ENCODE measurements at regions of chr16 and their contacts with region 1.

Region 1: DNA sequence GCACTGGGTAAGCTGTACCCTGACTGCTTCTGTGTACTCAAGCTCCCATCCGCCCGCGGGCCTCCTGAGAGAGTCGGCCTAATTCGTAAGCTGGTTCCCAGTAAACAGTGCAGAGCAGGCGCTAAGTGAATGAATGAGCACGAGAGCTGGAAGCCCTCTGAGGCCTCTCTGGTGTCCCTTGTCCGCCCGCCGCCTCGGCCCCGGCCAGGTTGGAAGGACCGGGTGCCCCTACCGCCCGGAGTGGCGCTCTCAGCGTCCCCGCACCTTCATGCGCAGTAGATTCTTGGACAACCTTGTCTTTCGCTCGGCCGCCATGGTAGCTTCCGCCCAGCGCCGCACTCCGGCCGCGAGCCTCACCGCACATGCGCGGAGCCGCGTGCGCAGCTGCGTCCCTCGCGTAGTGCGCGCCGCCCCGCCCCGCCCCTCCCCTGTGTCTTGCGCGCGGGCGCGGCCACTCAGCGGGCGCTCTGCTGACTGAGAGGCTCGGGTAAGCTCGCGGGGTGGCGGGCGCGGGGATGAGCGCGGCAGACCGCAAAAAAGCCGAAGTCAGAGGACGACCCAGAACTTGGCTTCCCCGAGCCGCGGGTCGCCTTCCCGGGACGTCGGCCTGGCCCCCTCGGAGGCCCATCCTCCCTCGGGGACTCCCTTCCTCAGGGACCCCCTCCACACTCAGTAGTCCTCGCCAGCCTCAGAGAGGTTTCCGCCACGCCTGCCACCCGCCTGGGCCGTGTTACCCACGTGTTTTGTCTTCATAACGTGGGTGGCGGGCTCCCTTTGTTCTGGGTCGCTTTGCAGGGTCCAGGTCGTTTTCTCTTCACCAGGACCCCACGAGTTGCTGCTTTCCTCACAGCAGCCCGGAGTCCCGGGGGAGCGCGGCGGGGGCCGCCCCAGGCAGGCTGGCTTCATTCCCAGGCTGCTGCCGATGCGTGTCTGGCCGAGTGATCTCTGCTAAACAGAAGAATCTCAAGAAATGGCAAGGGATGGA is at the start of gene MPHOSPH6:
- DNase-seq: peak; percentile 85
- H3K4me3 Mint-ChIP-seq: peak within 1 kb of the TSS; percentile 94
- H3K27ac Mint-ChIP-seq: peak within 1 kb of the TSS; percentile 91
- H3K4me1 Mint-ChIP-seq: peaks cover 22% of the 10 kb centered on the region
- H3K27me3 Mint-ChIP-seq: peaks cover 29% of the 10 kb centered on the region
- total RNA-seq, gene MPHOSPH6: 49.6 and 49.8 TPM in 2 replicates

Region 2: GRCh38 chr16:81513204-81514040 is 656.7 kb before region 1 on chr16:
- intact Hi-C with region 1: no loop called
- DNase-seq: no peak
- H3K4me3 Mint-ChIP-seq: no peak overlapping the region
- H3K27ac Mint-ChIP-seq: no peak overlapping the region
- H3K4me1 Mint-ChIP-seq: peaks cover 14% of the 10 kb centered on the region
- H3K27me3 Mint-ChIP-seq: no peaks in the 10 kb centered on the region

Region 3: DNA sequence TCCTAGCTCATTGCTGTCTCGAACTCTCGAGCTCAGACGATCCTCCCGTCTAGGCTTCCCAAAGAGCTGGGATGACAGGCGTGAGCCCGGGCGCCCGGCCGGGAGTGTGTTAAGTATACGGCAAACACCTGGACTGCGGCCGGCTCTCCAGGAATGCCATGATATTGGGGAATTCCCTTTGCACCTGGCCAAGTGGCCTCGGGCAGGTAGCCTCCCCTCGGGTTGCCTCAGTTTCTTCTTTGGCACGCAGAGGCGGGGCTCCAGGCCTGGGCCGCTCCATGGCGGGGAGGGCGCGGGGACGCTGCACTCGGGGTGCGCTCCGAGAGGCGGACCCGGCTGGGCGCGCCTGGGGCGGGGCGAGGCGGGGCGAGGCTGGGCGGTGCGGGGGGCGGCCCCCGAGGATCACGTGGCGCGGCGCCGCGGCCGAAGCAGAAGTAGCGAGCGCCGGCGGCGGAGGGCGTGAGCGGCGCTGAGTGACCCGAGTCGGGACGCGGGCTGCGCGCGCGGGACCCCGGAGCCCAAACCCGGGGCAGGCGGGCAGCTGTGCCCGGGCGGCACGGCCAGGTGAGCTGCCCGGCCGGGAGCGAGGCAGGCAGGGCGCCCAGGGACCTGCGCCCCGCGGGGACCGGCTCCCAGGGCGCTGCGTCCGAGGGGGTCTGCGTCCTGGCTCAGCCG is 391.2 kb before region 1 on chr16 and contains the start of gene PLCG2:
- intact Hi-C with region 1: loop called (anchors 1 kb)
- DNase-seq: peak; percentile 77
- H3K4me3 Mint-ChIP-seq: peak within 1 kb of the TSS; percentile 87
- H3K27ac Mint-ChIP-seq: peak within 1 kb of the TSS; percentile 42
- H3K4me1 Mint-ChIP-seq: peaks cover 19% of the 10 kb centered on the region
- H3K27me3 Mint-ChIP-seq: peaks cover 39% of the 10 kb centered on the region
- total RNA-seq, gene PLCG2: 12.9 and 13.7 TPM in 2 replicates

Region 4: GRCh38 chr16:82011199-82011641 is 158.9 kb before region 1 on chr16 and contains the start of gene SDR42E1:
- intact Hi-C with region 1: loop called (anchors 2 kb)
- DNase-seq: peak; percentile 42
- H3K4me3 Mint-ChIP-seq: peak within 1 kb of the TSS; percentile 88
- H3K27ac Mint-ChIP-seq: peak within 1 kb of the TSS; percentile 72
- H3K4me1 Mint-ChIP-seq: peaks cover 16% of the 10 kb centered on the region
- H3K27me3 Mint-ChIP-seq: peaks cover 5% of the 10 kb centered on the region
- total RNA-seq, gene SDR42E1: 5.7 and 5.9 TPM in 2 replicates

Region 5: GRCh38 chr16:82043680-82044584 is 126.2 kb before region 1 on chr16:
- intact Hi-C with region 1: no loop called
- DNase-seq: no peak
- H3K4me3 Mint-ChIP-seq: no peak overlapping the region
- H3K27ac Mint-ChIP-seq: no peak overlapping the region
- H3K4me1 Mint-ChIP-seq: no peaks in the 10 kb centered on the region
- H3K27me3 Mint-ChIP-seq: no peaks in the 10 kb centered on the region

Region 6: DNA sequence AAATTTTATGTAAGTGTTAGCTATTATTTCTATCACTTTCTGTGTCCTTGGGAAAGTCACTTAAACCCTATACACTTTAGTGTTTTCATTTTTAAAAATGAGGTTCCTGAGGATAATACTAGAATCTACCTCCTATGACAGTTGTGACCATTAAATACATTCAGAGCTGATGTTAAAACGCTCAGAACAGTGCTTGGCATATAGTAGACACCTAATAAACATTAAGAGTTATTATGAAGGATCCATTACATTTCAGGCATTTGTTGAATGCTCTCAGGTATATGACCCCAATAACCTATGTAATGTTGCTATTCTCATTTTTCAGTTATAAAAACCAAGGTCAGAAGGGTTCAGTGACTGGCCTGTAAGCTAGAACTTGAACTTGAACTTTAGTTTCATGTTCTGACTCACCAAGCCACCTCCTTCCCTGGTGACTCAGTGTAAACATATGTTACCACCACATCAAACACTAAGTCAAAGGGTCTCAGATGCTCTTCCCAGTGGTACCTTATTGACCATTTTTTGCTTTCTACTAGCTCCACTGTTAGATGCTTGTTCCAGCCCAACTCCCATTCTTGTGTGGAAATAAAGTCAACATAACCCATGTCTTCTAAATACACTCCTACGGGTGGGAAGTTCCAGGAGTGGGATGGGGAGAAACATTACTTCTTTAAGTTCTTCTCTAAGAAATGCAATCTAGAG is 87.5 kb before region 1 on chr16:
- intact Hi-C with region 1: loop called (anchors 1 kb)
- DNase-seq: peak; percentile 1
- H3K4me3 Mint-ChIP-seq: no peak overlapping the region
- H3K27ac Mint-ChIP-seq: no peak overlapping the region
- H3K4me1 Mint-ChIP-seq: peaks cover 9% of the 10 kb centered on the region
- H3K27me3 Mint-ChIP-seq: peaks cover 29% of the 10 kb centered on the region

Region 7: GRCh38 chr16:82133798-82134197 is 36.4 kb before region 1 on chr16:
- intact Hi-C with region 1: loop called (anchors 5 kb)
- DNase-seq: no peak
- H3K4me3 Mint-ChIP-seq: peak overlapping the region; percentile 39
- H3K27ac Mint-ChIP-seq: no peak overlapping the region
- H3K4me1 Mint-ChIP-seq: peaks cover 21% of the 10 kb centered on the region
- H3K27me3 Mint-ChIP-seq: peaks cover 6% of the 10 kb centered on the region

Region 8: DNA sequence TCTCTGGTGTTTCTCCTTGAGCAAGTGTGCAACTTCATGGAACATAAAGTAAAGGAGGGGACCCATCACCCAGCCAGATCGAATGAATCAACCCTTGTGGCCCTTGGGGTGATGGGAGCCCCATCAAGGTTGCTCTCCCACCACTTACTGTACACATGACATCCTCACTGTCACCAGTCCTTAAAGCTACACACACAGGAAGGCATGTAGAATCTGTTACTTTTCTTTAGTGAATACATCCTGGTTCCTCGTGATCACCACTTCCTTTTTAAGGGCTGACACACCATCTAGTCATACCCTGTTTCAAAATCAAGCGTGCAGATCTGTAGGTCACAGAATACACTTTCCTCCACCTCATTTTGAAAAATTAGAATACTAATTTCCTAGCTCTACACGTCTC is 22.5 kb after region 1 on chr16:
- intact Hi-C with region 1: loop called (anchors 1 kb)
- DNase-seq: peak; percentile 7
- H3K4me3 Mint-ChIP-seq: peak overlapping the region; percentile 35
- H3K27ac Mint-ChIP-seq: peak overlapping the region; percentile 83
- H3K4me1 Mint-ChIP-seq: peaks cover 20% of the 10 kb centered on the region
- H3K27me3 Mint-ChIP-seq: peaks cover 17% of the 10 kb centered on the region

Region 9: GRCh38 chr16:82653550-82654511 is 483.7 kb after region 1 on chr16:
- intact Hi-C with region 1: loop called (anchors 10 kb)
- DNase-seq: peak; percentile 63
- H3K4me3 Mint-ChIP-seq: peak overlapping the region; percentile 78
- H3K27ac Mint-ChIP-seq: peak overlapping the region; percentile 99
- H3K4me1 Mint-ChIP-seq: peaks cover 95% of the 10 kb centered on the region
- H3K27me3 Mint-ChIP-seq: no peaks in the 10 kb centered on the region